ENCODE measurements at regions of chr12 and their contacts with region 1.

Region 1: DNA sequence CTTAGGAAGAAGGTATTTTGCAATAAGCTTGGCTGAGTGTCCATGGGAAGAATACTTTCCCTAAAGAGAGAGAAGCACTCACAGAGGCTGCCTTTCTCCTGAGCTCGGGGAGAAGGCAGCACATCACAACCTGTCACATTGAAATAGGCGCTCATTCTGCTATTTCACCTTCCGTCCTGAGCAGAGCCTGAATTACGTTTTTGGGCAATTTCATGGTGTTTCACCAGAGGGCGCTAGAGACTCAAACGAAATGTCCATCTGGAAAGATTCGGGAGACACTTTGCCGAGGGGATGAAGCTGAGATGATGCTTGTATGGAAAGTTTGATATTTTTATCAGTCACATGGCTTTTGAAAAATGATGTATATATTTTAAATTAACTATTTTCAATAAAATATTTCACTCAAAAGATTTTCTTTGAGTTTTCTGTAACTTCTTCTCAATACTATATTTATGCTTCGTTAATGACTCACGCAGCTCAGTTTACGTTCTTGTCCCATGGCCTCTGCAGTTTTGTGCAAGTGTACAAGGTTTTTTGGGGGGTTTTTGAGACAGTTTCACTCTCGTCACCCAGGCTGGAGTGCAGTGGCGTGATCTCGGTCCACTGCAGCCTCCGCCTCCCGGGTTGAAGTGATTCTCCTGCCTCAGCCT is 17.4 kb upstream of the B4GALNT3 start:
- DNase-seq: peak; percentile 36
- ATAC-seq: peak; percentile 44; the same call in 2 of the 3 replicates
- H3K4me3 ChIP-seq: no peak overlapping the region
- H3K27ac ChIP-seq: no peak overlapping the region
- H3K4me1 ChIP-seq: no peaks in the 10 kb centered on the region
- H3K27me3 ChIP-seq: no peaks in the 10 kb centered on the region
- CTCF ChIP-seq: peak; percentile 73
- EP300 ChIP-seq: no peak
- POLR2A ChIP-seq: no peak
- RAD21 ChIP-seq: no peak

Region 2: DNA sequence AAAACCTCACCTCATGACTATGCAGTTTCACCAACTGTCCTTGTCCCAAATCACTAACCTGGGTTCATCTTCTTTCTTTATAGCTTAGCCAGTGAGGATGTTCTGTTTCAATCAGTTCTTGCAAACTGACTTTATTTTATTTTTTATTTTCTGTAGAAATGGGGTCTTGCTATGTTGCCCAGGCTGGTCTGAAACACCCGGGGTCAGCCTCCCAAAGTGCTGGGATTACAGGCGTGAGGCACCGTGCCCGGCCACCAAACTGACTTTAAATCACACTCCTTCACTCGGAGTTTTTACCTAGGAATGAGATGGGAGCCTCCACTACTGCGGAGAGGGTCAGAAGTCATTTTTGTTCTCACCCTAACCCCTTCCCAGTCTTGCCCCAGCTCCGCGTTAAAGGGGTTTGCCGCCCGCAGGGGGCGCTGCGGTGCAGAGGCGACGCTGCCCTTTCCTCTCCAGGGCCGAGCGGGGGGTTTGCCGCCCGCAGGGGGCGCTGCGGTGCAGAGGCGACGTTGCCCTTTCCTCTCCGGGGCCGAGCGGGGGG is 10.4 kb after region 1 on chr12:
- CTCF ChIA-PET with region 1: interaction called, 11 read pairs
- POLR2A ChIA-PET with region 1: no interaction called
- in situ Hi-C with region 1: no loop called
- intact Hi-C with region 1: no loop called
- DNase-seq: no peak
- ATAC-seq: peak; percentile 70
- H3K4me3 ChIP-seq: no peak overlapping the region
- H3K27ac ChIP-seq: no peak overlapping the region
- H3K4me1 ChIP-seq: no peaks in the 10 kb centered on the region
- H3K27me3 ChIP-seq: peaks cover 0 to 2% of the 10 kb centered on the region in 2 experiments; a peak in 2 of 5 replicates
- CTCF ChIP-seq: peak; percentile 80
- EP300 ChIP-seq: no peak
- POLR2A ChIP-seq: no peak
- RAD21 ChIP-seq: 0 out of 2 replicates have a peak, but pooled peaks have one; percentile 19

Measured in HepG2 (cell line).